RWPE1 (cell line): ENCODE measurements at regions of chr4 and their contacts with region 1.

Region 1: GRCh38 chr4:102826890-102827673 is at the start of gene UBE2D3:
- DNase-seq: peak; percentile 59
- H3K27ac ChIP-seq: peak within 1 kb of the TSS; percentile 99
- CTCF ChIP-seq: no peak

Region 2: GRCh38 chr4:102843273-102843672 is 16.2 kb after region 1 on chr4:
- CTCF ChIA-PET with region 1: no interaction called
- POLR2A ChIA-PET with region 1: no interaction called
- DNase-seq: no peak
- H3K27ac ChIP-seq: no peak overlapping the region
- CTCF ChIP-seq: no peak

Region 3: DNA sequence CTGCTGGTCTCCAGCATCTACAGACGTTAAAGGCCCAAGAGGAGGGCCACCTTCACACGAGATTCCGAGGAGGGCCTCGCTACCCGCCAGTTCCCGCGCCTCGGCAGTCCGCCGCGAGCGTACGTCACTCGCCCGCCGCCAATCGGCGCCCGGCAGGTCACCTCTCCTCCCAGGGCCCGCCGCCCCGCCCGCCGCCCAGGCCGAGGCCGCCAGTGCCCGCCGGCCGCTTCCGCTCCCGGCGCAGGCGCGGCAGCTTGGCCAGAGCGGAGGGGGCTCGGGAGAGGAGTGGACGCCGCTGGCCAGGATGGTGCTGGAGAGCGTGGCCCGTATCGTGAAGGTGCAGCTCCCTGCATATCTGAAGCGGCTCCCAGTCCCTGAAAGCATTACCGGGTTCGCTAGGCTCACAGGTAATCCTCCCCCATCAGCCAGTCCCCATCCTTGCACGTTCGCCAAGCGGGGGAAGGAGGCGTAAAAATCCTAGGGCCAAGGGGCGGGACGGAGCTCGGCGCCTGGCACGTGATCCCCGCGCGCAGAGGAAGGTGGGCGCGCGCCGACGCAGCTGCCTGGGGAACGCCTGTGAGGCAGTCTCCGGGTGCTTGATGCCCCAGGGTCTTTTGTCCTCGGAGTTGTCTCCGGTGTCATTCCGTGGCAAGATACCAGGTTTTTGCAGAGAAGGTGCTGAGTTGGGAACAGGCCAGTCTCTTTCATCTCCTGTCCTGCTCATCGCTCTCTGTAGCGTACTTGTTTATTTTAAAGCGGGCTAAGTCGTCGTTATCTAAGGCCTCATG is 41.9 kb after region 1 on chr4 and contains the start of gene CISD2:
- CTCF ChIA-PET with region 1: interaction called, 5 read pairs
- POLR2A ChIA-PET with region 1: interaction called, 10 read pairs
- DNase-seq: peak; percentile 89
- H3K27ac ChIP-seq: peak within 1 kb of the TSS; percentile 97
- CTCF ChIP-seq: no peak